Activated B cell treated with CpG ODN at 0.5 μM for 24 hours (primary cell): ENCODE measurements at regions of chr1 and their contacts with region 1.

Region 1: DNA sequence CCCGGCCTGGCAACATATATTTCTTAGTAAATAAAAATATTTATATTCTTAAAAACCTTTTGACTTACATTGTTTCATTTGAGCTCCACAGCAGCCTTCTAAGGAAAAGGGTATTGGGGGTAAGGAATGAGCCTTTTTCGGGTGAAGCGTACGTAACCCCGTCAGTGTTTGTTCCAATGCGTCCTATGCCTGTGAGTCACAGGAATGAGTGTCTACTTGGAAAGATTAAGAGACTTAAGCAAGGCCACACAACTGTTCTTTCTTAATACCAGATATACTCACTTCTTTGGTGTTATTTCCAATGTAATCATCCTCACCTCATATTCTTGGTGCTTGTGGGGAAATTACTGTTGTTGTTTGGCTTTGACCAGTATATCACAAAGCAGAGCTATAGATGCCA is 22.7 kb downstream of the WDTC1 start:
- DNase-seq: no peak
- ATAC-seq: no peak
- H3K4me3 Mint-ChIP-seq: no peak overlapping the region
- H3K27ac Mint-ChIP-seq: peak overlapping the region; percentile 18
- H3K4me1 Mint-ChIP-seq: peaks cover 47% of the 10 kb centered on the region
- H3K27me3 Mint-ChIP-seq: no peaks in the 10 kb centered on the region
- CTCF ChIP-seq: no peak

Region 2: DNA sequence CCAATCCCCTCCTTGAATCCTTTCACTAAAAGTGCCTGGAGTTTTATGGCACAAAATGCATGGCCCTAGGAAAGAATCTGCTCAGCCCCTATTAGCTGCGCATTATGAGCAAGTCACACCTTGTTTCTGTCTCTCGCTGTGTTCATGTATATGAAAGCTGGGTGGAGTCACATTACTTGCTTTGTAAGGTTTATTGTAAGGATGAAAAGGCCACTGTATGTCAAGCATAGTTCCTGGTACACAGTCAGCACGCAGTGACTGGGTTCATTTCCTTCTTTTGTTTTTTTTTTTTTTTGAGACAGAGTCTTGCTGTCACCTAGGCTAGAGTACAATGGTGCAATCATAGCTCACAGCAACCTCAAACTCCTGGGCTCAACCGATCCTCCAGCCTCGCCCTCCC is 95.6 kb before region 1 on chr1:
- CTCF ChIA-PET with region 1: no interaction called
- POLR2A ChIA-PET with region 1: interaction called, 4 read pairs
- intact Hi-C with region 1: loop called (anchors 1 kb)
- DNase-seq: no peak
- ATAC-seq: peak; percentile 99
- H3K4me3 Mint-ChIP-seq: peak overlapping the region; percentile 74
- H3K27ac Mint-ChIP-seq: peak overlapping the region; percentile 91
- H3K4me1 Mint-ChIP-seq: peaks cover 20% of the 10 kb centered on the region
- H3K27me3 Mint-ChIP-seq: no peaks in the 10 kb centered on the region
- CTCF ChIP-seq: no peak

Region 3: GRCh38 chr1:27234049-27234882 is 22.9 kb before region 1 on chr1 and contains the start of gene WDTC1:
- CTCF ChIA-PET with region 1: interaction called, 3 read pairs
- POLR2A ChIA-PET with region 1: interaction called, 79 read pairs
- intact Hi-C with region 1: loop called (anchors 1 kb)
- DNase-seq: peak; percentile 94
- ATAC-seq: peak; percentile 91
- H3K4me3 Mint-ChIP-seq: peak within 1 kb of the TSS; percentile 98
- H3K27ac Mint-ChIP-seq: peak within 1 kb of the TSS; percentile 90
- H3K4me1 Mint-ChIP-seq: peaks cover 30% of the 10 kb centered on the region
- H3K27me3 Mint-ChIP-seq: no peaks in the 10 kb centered on the region
- CTCF ChIP-seq: no peak
- total RNA-seq, gene WDTC1: 62.8 and 65.1 TPM in 2 replicates

Region 4: DNA sequence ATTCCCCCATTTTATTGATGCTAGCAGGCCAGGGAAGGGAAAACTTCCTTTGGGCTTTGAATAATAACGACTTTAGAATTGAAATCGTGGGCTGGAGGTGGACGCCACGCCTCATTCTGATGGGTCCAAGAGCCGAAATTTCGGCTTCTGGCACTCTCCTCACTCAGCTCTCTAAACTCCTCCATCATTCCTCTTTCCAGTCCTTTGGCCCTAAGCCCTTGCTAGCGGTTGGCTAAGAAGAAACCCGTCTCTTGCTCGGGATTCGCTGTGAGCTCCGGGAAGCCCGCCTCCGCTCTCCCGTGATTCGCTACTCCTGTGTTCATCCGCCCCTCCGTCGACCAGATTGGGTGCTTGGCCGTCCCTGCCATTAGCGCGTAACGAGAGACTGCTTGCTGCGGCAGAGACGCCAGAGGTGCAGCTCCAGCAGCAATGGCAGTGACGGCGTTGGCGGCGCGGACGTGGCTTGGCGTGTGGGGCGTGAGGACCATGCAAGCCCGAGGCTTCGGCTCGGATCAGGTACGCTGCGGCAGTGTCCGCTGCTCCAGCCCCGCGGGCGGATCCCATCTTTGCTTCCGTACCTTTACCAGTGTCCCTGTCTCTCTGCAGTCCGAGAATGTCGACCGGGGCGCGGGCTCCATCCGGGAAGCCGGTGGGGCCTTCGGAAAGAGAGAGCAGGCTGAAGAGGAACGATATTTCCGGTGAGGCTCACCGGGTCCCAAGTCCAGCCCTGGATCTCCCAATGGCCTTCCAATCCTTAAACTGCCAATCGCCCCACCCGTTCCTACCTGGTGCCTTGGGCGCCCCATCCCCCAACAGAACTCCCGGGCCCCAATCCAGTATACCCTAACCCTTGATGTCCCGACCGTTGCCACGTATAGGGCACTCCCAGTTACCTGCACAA is 978.9 kb after region 1 on chr1 and contains the start of gene ATP5IF1:
- CTCF ChIA-PET with region 1: no interaction called
- POLR2A ChIA-PET with region 1: no interaction called
- intact Hi-C with region 1: loop called (anchors 5 kb)
- DNase-seq: peak; percentile 82
- ATAC-seq: peak; percentile 95
- H3K4me3 Mint-ChIP-seq: no peak within 1 kb of the TSS
- H3K27ac Mint-ChIP-seq: no peak within 1 kb of the TSS
- H3K4me1 Mint-ChIP-seq: peaks cover 27% of the 10 kb centered on the region
- H3K27me3 Mint-ChIP-seq: no peaks in the 10 kb centered on the region
- CTCF ChIP-seq: no peak
- total RNA-seq, gene ATP5IF1: 87.0 and 104 TPM in 2 replicates